HEK293 (cell line): ENCODE measurements at regions of chr5 and their contacts with region 1.

Region 1: DNA sequence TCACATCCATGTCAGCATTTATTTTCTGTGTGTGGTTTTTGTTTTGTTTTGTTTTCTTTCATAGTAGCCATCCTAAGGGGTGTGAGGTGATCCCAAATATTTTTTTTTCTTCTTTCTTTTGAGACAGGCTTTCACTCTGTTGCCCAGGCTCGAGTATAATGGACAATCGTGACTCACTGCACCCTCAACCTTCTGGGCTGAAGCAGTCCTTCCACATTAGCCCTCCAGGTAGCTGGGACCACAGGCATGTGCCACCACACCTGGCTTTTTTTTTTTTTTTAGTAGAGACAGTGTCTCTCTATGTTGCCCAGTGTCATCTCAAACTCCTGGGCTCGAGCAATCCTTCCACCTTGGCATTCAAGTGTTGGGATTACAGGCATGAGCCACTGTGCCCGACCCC is 59.1 kb downstream of the CDC42SE2 start:
- H3K4me3 ChIP-seq: no peak overlapping the region
- H3K27ac ChIP-seq: no peak overlapping the region
- H3K4me1 ChIP-seq: peaks cover 11% of the 10 kb centered on the region
- CTCF ChIP-seq: no peak

Region 2: GRCh38 chr5:131239686-131240085 is 83.2 kb before region 1 on chr5:
- CTCF ChIA-PET with region 1: no interaction called
- POLR2A ChIA-PET with region 1: interaction called, 10 read pairs
- H3K4me3 ChIP-seq: no peak overlapping the region
- H3K27ac ChIP-seq: no peak overlapping the region
- H3K4me1 ChIP-seq: no peaks in the 10 kb centered on the region
- CTCF ChIP-seq: no peak